Activated CD4-positive, alpha-beta T cell treated with anti-CD3 and anti-CD28 coated beads for 36 hours (primary cell): ENCODE measurements at regions of chr5 and their contacts with region 1.

Region 1: GRCh38 chr5:97004423-97005060 is 68.7 kb downstream of the LNPEP start:
- DNase-seq: peak; percentile 39
- ATAC-seq: peak; percentile 85
- H3K4me3 Mint-ChIP-seq: no peak overlapping the region
- H3K27ac Mint-ChIP-seq: peak overlapping the region; percentile 84
- H3K4me1 Mint-ChIP-seq: peaks cover 15% of the 10 kb centered on the region
- H3K27me3 Mint-ChIP-seq: no peaks in the 10 kb centered on the region

Region 2: DNA sequence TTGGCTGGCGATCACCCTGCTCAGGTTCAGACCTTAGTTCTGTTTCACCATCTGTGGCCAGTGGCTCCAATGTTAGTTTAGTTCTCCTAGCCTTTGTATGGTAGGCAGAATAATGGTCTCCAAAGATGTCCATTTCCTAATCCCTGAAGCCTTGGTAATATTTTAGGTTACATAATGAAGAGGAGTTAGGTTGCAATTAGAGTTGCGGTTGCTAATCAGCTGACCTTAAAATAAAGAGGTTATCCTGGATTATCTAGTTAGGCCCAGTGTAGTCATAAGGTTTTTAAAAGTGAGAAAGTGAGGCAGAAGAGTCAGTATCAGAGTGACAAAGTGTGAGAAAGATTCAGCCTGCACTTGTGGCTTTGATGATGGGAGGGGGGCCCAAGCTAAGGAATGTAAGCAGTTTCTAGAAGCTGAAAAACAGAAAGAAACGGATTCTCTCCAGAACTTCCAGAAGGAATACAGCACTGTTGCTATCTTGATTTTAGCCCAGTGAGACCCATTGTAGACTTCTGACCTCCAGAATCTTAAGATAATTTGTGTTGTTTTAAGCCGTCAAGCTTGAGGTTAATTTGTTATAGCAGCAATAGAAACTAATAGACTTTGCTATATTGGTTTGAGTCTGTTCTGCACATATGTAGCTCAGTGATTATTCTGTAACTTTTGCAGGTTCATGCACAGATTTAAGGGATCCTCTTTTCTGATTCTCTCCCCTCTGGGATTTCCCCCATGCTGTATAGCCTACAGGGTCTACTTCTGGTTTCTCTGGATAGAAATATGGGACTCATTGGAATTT is 47.1 kb before region 1 on chr5:
- CTCF ChIA-PET with region 1: no interaction called
- POLR2A ChIA-PET with region 1: no interaction called
- intact Hi-C with region 1: loop called (anchors 2 to 5 kb)
- DNase-seq: peak; percentile 73
- ATAC-seq: peak; percentile 93
- H3K4me3 Mint-ChIP-seq: peak overlapping the region; percentile 51
- H3K27ac Mint-ChIP-seq: peak overlapping the region; percentile 84
- H3K4me1 Mint-ChIP-seq: peaks cover 74% of the 10 kb centered on the region
- H3K27me3 Mint-ChIP-seq: no peaks in the 10 kb centered on the region

Region 3: DNA sequence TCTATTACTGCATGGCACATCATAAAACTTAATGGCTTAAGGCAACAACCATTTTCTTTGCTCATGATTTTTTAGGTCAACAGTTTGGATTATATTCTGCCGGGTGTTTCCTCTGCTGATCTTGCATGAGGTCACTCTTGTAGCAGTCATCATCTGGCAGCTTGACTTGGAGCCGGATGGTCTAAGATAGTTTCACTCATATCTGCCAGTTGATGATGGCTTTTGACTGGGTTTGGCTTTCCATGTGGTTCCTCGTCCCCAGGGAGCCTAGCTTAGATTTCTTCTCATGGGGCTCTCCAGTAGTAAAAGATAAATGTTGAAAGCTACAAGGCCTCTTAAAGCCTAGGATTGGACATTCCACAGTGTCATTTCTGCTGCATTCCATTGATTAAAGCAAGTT is 41.3 kb before region 1 on chr5:
- CTCF ChIA-PET with region 1: no interaction called
- POLR2A ChIA-PET with region 1: no interaction called
- intact Hi-C with region 1: loop called in 1 of 2 experiments (anchors 5 kb)
- DNase-seq: peak; percentile 46
- ATAC-seq: peak; percentile 76
- H3K4me3 Mint-ChIP-seq: peak overlapping the region; percentile 64
- H3K27ac Mint-ChIP-seq: peak overlapping the region; percentile 97
- H3K4me1 Mint-ChIP-seq: peaks cover 75% of the 10 kb centered on the region
- H3K27me3 Mint-ChIP-seq: no peaks in the 10 kb centered on the region